ENCODE measurements at regions of chr16 and their contacts with region 1.

Region 1: GRCh38 chr16:71883849-71884638 is at the start of gene ZNF821:
- DNase-seq: peak; percentile 81
- ATAC-seq: peak; percentile 75
- H3K4me3 Mint-ChIP-seq: peak within 1 kb of the TSS; percentile 98
- H3K27ac Mint-ChIP-seq: peak within 1 kb of the TSS; percentile 94
- H3K4me1 Mint-ChIP-seq: peaks cover 52% of the 10 kb centered on the region
- H3K27me3 Mint-ChIP-seq: no peaks in the 10 kb centered on the region
- CTCF ChIP-seq: no peak
- total RNA-seq, gene ZNF821: 10.6 and 13.6 TPM in 2 replicates

Region 2: DNA sequence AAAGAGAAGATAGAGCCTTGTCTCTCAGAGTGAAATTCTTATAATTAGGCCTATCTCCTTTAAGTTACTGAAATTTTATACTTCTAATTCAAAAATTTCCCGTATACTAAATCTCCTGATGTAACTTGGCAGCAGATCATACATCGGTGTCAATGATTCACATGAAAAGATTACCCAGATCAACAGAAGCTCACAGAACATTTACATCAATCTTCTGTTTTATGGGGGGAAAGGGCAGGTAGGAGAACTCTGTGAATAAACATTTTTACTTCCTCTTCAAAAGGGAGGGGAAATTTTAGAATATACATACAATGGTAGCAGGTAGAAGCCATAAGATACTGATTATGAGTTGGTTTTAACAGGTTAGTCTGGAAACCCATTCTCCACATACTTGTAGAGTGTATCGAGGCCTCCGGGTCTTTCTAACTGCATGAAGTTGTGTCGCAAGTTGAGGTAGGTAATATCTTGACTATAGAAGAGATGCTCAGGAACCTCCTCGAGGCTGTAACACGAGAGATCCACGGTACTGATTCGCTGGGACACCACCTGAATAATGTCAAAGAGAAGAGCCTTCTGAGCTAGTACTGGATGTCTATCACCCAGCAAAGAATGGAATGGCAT is 202.6 kb before region 1 on chr16:
- CTCF ChIA-PET with region 1: no interaction called
- POLR2A ChIA-PET with region 1: no interaction called
- intact Hi-C with region 1: no loop called
- DNase-seq: no peak
- ATAC-seq: no peak
- H3K4me3 Mint-ChIP-seq: no peak overlapping the region
- H3K27ac Mint-ChIP-seq: no peak overlapping the region
- H3K4me1 Mint-ChIP-seq: no peaks in the 10 kb centered on the region
- H3K27me3 Mint-ChIP-seq: no peaks in the 10 kb centered on the region
- CTCF ChIP-seq: no peak

Region 3: DNA sequence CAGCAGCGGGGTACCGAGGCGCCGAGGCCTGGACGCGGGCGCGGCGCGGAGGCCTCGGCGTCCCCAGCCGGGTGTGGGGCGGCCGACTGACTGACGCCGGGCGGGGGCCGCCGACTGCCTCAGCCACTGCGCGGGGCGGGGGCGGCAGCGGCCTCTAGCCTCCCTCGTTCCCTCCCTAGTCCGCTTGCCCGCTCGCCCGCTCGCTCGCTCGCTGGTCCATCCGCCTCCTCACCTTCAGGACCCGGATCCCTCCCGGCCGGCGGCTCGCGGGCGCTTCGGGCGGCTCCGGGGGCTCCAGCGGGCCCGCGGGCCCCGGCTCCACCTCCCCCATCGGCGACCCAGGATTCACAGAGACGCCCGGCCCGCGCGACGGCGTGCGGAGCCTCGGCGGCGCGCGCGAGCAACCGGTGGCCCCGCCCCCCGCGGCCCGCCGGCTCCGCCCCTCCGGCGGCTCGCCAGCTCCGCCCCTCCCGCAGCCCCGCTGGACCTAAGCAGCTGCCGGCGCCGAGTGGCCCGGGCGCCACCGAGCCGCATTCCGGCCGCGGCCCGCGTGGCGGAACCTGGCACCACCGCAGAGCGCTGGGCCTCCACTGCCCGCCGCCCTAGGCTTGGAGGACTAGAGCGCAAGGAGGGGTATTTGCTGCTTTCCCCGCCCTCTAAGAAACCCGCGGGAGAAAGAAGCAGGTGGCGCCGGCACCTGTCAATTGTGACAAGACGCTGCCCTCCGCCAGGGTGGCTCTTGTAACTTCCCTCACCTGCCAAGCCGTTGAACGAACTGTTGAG is 160.3 kb before region 1 on chr16:
- CTCF ChIA-PET with region 1: interaction called, 3 read pairs
- POLR2A ChIA-PET with region 1: interaction called, 4 read pairs
- intact Hi-C with region 1: loop called (anchors 5 kb)
- DNase-seq: peak; percentile 87
- ATAC-seq: peak; percentile 80
- H3K4me3 Mint-ChIP-seq: peak overlapping the region; percentile 85
- H3K27ac Mint-ChIP-seq: peak overlapping the region; percentile 85
- H3K4me1 Mint-ChIP-seq: peaks cover 50% of the 10 kb centered on the region
- H3K27me3 Mint-ChIP-seq: no peaks in the 10 kb centered on the region
- CTCF ChIP-seq: no peak

Region 4: GRCh38 chr16:71845639-71846430 is 38.2 kb before region 1 on chr16 and contains the start of gene ATXN1L:
- CTCF ChIA-PET with region 1: interaction called, 6 read pairs
- POLR2A ChIA-PET with region 1: interaction called, 7 read pairs
- intact Hi-C with region 1: loop called (anchors 1 kb)
- DNase-seq: peak; percentile 99
- ATAC-seq: peak; percentile 89
- H3K4me3 Mint-ChIP-seq: peak within 1 kb of the TSS; percentile 92
- H3K27ac Mint-ChIP-seq: peak within 1 kb of the TSS; percentile 98
- H3K4me1 Mint-ChIP-seq: peaks cover 51% of the 10 kb centered on the region
- H3K27me3 Mint-ChIP-seq: no peaks in the 10 kb centered on the region
- CTCF ChIP-seq: no peak
- total RNA-seq, gene ATXN1L: 24.9 and 28.3 TPM in 2 replicates

Region 5: GRCh38 chr16:71873199-71873598 is 10.8 kb before region 1 on chr16:
- CTCF ChIA-PET with region 1: interaction called, 10 read pairs
- POLR2A ChIA-PET with region 1: interaction called, 3 read pairs
- intact Hi-C with region 1: no loop called
- DNase-seq: no peak
- ATAC-seq: no peak
- H3K4me3 Mint-ChIP-seq: no peak overlapping the region
- H3K27ac Mint-ChIP-seq: no peak overlapping the region
- H3K4me1 Mint-ChIP-seq: peaks cover 7% of the 10 kb centered on the region
- H3K27me3 Mint-ChIP-seq: no peaks in the 10 kb centered on the region
- CTCF ChIP-seq: no peak

Region 6: DNA sequence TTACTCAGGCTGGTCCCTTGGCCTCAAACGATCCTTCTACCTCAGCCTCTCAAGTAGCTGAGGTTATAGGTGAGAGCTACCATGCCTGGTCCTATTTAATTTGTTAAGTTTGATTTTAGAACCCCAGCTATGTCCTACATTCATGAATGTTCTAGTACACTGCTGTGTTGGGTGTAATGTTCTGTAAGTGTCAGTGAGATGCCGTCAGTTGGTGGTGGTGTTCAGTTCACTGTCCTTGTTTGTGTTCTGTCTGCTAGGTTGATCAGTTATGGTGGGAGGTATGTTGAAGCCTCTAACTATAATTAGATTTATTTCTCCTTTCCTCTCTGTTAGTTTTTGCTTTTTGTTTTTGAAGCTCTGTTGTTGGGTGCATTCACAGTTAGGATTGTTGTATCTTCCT is 19.6 kb after region 1 on chr16:
- CTCF ChIA-PET with region 1: interaction called, 8 read pairs
- POLR2A ChIA-PET with region 1: interaction called, 24 read pairs
- intact Hi-C with region 1: loop called (anchors 2 kb)
- DNase-seq: no peak
- ATAC-seq: no peak
- H3K4me3 Mint-ChIP-seq: no peak overlapping the region
- H3K27ac Mint-ChIP-seq: no peak overlapping the region
- H3K4me1 Mint-ChIP-seq: peaks cover 75% of the 10 kb centered on the region
- H3K27me3 Mint-ChIP-seq: no peaks in the 10 kb centered on the region
- CTCF ChIP-seq: no peak

Region 7: GRCh38 chr16:71961066-71962039 is 77.3 kb after region 1 on chr16:
- CTCF ChIA-PET with region 1: interaction called, 20 read pairs
- POLR2A ChIA-PET with region 1: interaction called, 3 read pairs
- intact Hi-C with region 1: loop called (anchors 1 kb)
- DNase-seq: peak; percentile 63
- ATAC-seq: peak; percentile 89
- H3K4me3 Mint-ChIP-seq: no peak overlapping the region
- H3K27ac Mint-ChIP-seq: no peak overlapping the region
- H3K4me1 Mint-ChIP-seq: peaks cover 27% of the 10 kb centered on the region
- H3K27me3 Mint-ChIP-seq: peaks cover 3% of the 10 kb centered on the region
- CTCF ChIP-seq: no peak

Region 8: GRCh38 chr16:72025759-72026114 is 141.7 kb after region 1 on chr16:
- CTCF ChIA-PET with region 1: no interaction called
- POLR2A ChIA-PET with region 1: no interaction called
- intact Hi-C with region 1: no loop called
- DNase-seq: no peak
- ATAC-seq: no peak
- H3K4me3 Mint-ChIP-seq: no peak overlapping the region
- H3K27ac Mint-ChIP-seq: no peak overlapping the region
- H3K4me1 Mint-ChIP-seq: no peaks in the 10 kb centered on the region
- H3K27me3 Mint-ChIP-seq: no peaks in the 10 kb centered on the region
- CTCF ChIP-seq: no peak

Region 9: DNA sequence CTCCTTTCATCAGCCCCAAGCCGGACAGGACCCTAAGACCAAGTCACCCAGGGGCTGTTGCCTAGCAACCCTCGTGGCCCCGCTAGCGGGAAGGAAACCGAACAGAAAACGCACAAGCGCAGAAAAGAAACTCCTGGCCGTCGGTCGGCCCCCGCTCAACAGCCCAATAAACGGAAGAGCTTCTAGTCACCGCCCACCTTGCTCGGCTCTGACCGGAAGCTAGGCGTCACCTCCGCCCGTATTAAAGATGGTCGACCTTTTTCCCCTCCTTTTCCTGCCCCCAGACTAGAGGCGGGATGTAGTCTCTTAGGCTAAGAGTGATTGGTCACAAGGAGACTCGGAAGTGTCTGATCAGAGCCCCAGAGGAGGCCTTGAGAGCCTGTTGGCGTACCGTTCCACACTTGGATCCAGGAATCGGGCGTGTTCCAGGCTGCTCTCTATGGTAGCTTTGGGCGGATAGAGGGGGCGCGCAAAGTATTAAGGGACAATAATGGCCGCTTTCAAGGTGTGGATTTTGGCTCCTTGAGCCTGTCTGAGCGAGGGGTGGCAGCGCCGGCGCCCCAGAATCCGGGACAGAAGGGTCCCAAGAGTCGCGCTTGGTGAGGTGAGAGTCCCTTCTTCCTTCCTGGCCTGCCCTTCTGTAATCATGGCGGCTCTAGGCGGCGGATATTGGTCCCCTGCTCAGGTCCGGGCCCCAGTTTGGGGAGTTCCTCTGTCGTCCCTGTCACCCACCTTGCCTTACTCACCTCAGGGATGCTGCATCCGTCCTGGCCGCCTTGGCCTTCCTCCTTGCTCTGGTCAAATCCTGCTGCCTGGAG is 209.6 kb after region 1 on chr16 and contains the starts of genes DHX38 and TXNL4B:
- CTCF ChIA-PET with region 1: interaction called, 3 read pairs
- POLR2A ChIA-PET with region 1: interaction called, 5 read pairs
- intact Hi-C with region 1: loop called (anchors 5 kb)
- DNase-seq: peak; percentile 77
- ATAC-seq: peak; percentile 96
- H3K4me3 Mint-ChIP-seq: peak within 1 kb of the TSS; percentile 99
- H3K27ac Mint-ChIP-seq: peak within 1 kb of the TSS; percentile 96
- H3K4me1 Mint-ChIP-seq: peaks cover 47% of the 10 kb centered on the region
- H3K27me3 Mint-ChIP-seq: no peaks in the 10 kb centered on the region
- CTCF ChIP-seq: no peak
- total RNA-seq, gene DHX38: 107 and 118 TPM in 2 replicates
- total RNA-seq, gene TXNL4B: 13.1 and 13.8 TPM in 2 replicates

Region 10: DNA sequence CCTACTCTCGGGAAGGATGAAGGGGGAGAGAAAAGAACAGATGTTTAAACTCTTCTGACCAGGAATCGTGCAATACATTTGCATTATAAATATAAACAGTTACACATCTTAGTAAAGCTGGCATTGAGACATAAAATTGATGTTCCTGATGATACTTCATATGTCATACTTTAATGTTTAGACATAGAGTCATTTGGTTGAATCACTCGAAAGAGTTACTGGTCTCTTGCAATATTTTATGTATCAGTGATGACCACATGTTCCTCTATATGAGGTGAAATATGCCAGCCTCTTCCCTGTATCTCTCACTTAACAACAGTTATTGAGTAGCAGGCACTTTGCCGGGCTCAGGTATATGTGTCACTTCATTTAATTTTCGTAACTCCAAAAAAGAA is 337.6 kb after region 1 on chr16:
- CTCF ChIA-PET with region 1: no interaction called
- POLR2A ChIA-PET with region 1: no interaction called
- intact Hi-C with region 1: no loop called
- DNase-seq: no peak
- ATAC-seq: no peak
- H3K4me3 Mint-ChIP-seq: no peak overlapping the region
- H3K27ac Mint-ChIP-seq: no peak overlapping the region
- H3K4me1 Mint-ChIP-seq: no peaks in the 10 kb centered on the region
- H3K27me3 Mint-ChIP-seq: no peaks in the 10 kb centered on the region
- CTCF ChIP-seq: no peak